ENCODE measurements at regions of chr1 and their contacts with region 1.

Region 1: DNA sequence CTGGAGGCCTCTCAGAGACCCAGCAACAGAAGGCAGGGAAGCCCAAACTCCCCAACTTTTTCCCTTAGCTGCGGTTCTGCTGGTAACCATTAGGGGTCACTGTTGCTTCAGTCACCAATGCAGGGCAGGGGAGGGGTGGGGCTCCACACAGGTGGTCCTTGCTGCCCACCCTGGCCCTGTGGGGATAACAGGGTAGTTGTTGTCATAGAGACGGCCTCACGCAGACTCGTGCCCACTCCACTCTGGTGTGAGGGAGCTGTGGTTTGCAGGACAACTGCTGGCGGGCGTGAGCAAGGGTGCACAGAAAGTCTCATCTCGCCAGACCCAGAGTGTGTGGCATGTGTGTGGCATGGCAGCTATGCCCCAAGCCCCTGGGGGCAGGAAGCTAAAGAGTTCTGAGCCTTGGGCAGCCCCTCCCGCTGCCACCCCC is 19.9 kb downstream of the INSRR start:
- DNase-seq: peak; percentile 55
- H3K4me3 Mint-ChIP-seq: no peak overlapping the region
- H3K27ac Mint-ChIP-seq: no peak overlapping the region
- H3K4me1 Mint-ChIP-seq: peaks cover 21% of the 10 kb centered on the region
- H3K27me3 Mint-ChIP-seq: peaks cover 31% of the 10 kb centered on the region

Region 2: GRCh38 chr1:156806512-156807440 is 32.2 kb before region 1 on chr1:
- CTCF ChIA-PET with region 1: interaction called, 18 read pairs
- POLR2A ChIA-PET with region 1: no interaction called
- DNase-seq: no peak
- H3K4me3 Mint-ChIP-seq: no peak overlapping the region
- H3K27ac Mint-ChIP-seq: peak overlapping the region; percentile 84
- H3K4me1 Mint-ChIP-seq: peaks cover 52% of the 10 kb centered on the region
- H3K27me3 Mint-ChIP-seq: no peaks in the 10 kb centered on the region

Region 3: GRCh38 chr1:156821801-156822200 is 17.2 kb before region 1 on chr1:
- CTCF ChIA-PET with region 1: interaction called, 19 read pairs
- POLR2A ChIA-PET with region 1: interaction called, 4 read pairs
- DNase-seq: no peak
- H3K4me3 Mint-ChIP-seq: no peak overlapping the region
- H3K27ac Mint-ChIP-seq: no peak overlapping the region
- H3K4me1 Mint-ChIP-seq: peaks cover 30% of the 10 kb centered on the region
- H3K27me3 Mint-ChIP-seq: peaks cover 6% of the 10 kb centered on the region

Region 4: DNA sequence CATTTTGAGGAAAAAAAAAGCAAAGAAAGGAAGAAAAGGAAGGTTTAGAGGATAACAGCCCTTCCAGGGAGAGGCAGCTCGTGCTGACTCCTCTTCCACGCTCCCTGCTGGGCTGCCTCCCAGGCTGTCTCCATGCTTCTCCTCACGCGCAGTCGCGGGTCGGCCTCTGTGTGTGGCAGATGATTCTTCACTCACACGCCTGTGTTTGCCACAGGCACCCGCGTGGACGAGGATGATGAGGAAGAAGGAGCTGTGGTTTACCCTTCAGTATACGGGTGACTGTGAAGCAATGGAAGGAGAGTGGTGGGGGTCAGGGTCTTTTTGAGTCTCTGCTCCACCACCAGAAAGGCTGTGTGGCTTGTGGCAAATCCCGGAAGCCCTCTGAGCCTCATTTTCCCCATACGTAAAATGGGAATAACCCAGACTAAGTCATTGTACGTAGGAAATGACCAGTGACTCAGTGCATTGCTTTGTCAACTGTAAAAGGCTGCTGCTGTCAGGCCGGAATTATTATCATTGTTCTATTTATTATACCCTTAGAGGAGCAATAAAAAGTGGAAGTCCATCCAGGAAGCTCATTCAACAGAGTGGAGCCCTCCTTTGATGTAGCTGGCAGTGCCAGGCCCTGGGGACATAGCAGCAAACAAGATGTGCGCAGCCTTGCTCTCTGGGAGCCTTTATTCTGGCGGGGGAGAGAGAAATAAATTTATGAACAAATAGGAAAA is 10.4 kb before region 1 on chr1:
- CTCF ChIA-PET with region 1: interaction called, 19 read pairs
- POLR2A ChIA-PET with region 1: no interaction called
- DNase-seq: no peak
- H3K4me3 Mint-ChIP-seq: no peak overlapping the region
- H3K27ac Mint-ChIP-seq: no peak overlapping the region
- H3K4me1 Mint-ChIP-seq: peaks cover 3% of the 10 kb centered on the region
- H3K27me3 Mint-ChIP-seq: peaks cover 8% of the 10 kb centered on the region

Region 5: GRCh38 chr1:156852418-156852874 is 13.4 kb after region 1 on chr1:
- CTCF ChIA-PET with region 1: interaction called, 158 read pairs
- POLR2A ChIA-PET with region 1: no interaction called
- DNase-seq: no peak
- H3K4me3 Mint-ChIP-seq: no peak overlapping the region
- H3K27ac Mint-ChIP-seq: no peak overlapping the region
- H3K4me1 Mint-ChIP-seq: peaks cover 20% of the 10 kb centered on the region
- H3K27me3 Mint-ChIP-seq: peaks cover 28% of the 10 kb centered on the region